CD8-positive, alpha-beta T cell (primary cell): ENCODE measurements at regions of chr12 and their contacts with region 1.

Region 1: GRCh38 chr12:93378373-93379325 is 924 bp downstream of the NUDT4 start:
- DNase-seq: peak; percentile 18 to 85 (median 57)
- ATAC-seq: peak; percentile 54
- H3K4me3 ChIP-seq: peak overlapping the region; percentile 72 to 87
- H3K4me3 Mint-ChIP-seq: peak overlapping the region; percentile 99
- H3K27ac ChIP-seq: peak overlapping the region; percentile 77 to 81
- H3K27ac Mint-ChIP-seq: peak overlapping the region; percentile 99
- H3K4me1 ChIP-seq: peaks cover 23% of the 10 kb centered on the region
- H3K4me1 Mint-ChIP-seq: peaks cover 44% of the 10 kb centered on the region
- H3K27me3 ChIP-seq: no peaks in the 10 kb centered on the region
- H3K27me3 Mint-ChIP-seq: no peaks in the 10 kb centered on the region
- CTCF ChIP-seq: no peak

Region 2: DNA sequence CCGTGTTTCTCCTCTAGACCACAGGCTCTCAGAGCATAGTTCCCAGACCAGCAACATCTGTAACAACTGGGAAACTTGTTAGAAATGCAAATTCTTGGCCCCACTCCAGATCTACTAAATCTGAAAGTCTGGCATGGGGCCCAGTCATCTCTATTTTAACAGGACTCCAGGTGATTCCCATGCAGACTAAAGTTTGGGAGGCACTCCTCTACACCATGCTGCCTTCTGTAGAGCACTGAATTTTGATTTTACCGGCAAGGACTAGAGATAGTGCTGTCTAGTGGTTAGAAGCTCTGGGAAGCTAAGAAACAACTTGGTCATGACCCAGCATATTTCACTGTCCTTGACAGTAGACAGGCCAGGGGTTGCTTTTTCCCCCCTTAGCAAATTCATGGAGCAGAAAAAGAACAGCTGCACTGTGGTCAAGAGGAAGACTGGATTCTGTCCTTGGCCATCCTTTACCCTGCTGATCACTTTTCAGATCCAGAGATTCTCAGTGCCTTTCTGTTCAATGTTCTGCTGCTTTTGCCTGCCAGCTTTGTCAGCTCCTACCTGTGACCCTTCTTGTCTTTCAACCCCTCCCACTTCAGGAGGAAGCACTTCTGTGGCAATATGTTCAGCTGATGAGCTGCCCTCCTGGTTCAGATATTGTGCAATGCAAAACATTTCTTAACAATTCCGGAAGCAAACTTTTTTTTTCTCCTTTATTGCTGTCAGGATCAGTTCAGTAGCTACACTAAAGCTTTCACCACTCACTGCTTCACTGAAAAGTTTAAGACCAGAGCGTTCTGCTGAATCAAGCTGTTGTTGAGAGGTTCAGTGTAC is 134.7 kb before region 1 on chr12:
- CTCF ChIA-PET with region 1: interaction called, 3 read pairs
- POLR2A ChIA-PET with region 1: interaction called, 5 read pairs
- intact Hi-C with region 1: loop called (anchors 5 kb)
- DNase-seq: peak in 2 of 9 experiments; percentile 21 to 49
- ATAC-seq: no peak
- H3K4me3 ChIP-seq: no peak overlapping the region
- H3K4me3 Mint-ChIP-seq: peak overlapping the region; percentile 51
- H3K27ac ChIP-seq: peak overlapping the region in 1 of 2 experiments; percentile 5
- H3K27ac Mint-ChIP-seq: peak overlapping the region; percentile 89
- H3K4me1 ChIP-seq: peaks cover 31% of the 10 kb centered on the region
- H3K4me1 Mint-ChIP-seq: peaks cover 47% of the 10 kb centered on the region
- H3K27me3 ChIP-seq: no peaks in the 10 kb centered on the region
- H3K27me3 Mint-ChIP-seq: no peaks in the 10 kb centered on the region
- CTCF ChIP-seq: no peak

Region 3: DNA sequence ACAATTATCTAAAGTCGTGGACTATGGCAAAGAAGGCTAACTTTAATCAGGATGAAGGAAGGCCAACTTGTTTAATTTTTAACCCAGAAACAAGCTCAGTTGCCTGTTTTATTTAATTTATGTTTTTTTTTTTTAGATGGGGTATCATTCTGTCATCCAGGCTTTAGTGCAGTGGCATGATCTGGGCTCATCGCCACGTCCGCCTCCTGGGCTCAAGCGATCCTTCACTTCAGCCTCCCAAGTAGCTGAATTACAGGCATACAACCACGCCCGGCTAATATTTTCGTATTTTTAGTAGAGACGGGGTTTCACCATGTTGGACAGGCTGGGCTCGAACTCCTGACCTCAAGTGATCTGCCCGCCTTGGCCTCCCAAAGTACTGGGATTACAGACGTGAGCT is 18.8 kb after region 1 on chr12:
- CTCF ChIA-PET with region 1: interaction called, 38 read pairs
- POLR2A ChIA-PET with region 1: no interaction called
- intact Hi-C with region 1: loop called in 1 of 2 experiments (anchors 2 kb)
- DNase-seq: no peak
- ATAC-seq: no peak
- H3K4me3 ChIP-seq: no peak overlapping the region
- H3K4me3 Mint-ChIP-seq: no peak overlapping the region
- H3K27ac ChIP-seq: no peak overlapping the region
- H3K27ac Mint-ChIP-seq: no peak overlapping the region
- H3K4me1 ChIP-seq: no peaks in the 10 kb centered on the region
- H3K4me1 Mint-ChIP-seq: peaks cover 4% of the 10 kb centered on the region
- H3K27me3 ChIP-seq: no peaks in the 10 kb centered on the region
- H3K27me3 Mint-ChIP-seq: no peaks in the 10 kb centered on the region
- CTCF ChIP-seq: no peak

Region 4: DNA sequence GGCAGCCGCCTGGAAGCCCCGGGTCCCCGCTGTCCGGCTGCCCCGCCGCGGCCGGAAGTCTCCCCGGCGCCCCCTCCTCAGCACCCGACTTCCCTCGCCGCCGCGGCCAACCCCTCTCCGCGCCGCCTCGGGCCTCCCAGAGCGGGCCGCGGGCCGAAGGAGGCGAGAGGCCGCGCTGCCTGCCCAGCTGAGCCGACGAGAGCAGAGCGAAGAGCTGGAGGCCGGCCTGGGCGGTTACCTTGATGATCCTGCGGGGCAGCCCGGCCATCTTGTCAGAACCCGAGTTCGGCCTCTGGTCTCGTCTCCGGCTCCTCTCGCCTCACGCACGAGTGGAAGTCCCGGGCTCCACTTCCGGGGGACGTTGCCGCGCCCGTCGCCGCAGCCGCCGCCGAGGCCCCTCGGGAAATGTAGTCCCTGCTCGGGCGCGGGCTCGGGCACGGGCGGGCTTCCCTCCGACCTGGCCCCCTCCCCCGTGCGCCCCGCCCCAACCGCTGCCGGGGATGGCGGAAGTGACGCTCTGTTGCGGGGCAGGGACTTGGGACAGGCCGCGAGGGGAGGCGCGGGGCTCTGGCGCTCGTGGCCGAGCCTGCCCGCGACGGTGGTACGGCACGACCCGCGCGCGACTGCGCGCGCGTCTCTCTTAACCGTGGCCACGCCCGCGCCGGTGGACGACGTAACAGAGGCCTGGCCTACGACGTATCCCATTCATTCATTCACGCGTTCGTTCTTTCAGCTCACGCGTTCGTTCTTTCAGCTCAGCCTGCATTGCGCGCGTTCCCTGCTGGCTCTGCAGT is 63.2 kb after region 1 on chr12 and contains the start of gene UBE2N:
- CTCF ChIA-PET with region 1: no interaction called
- POLR2A ChIA-PET with region 1: interaction called, 3 read pairs
- intact Hi-C with region 1: loop called (anchors 1 to 2 kb)
- DNase-seq: peak; percentile 92 to 97 (median 96)
- ATAC-seq: peak; percentile 83
- H3K4me3 ChIP-seq: peak within 1 kb of the TSS; percentile 78
- H3K4me3 Mint-ChIP-seq: peak within 1 kb of the TSS; percentile 97
- H3K27ac ChIP-seq: peak within 1 kb of the TSS; percentile 87 to 90
- H3K27ac Mint-ChIP-seq: peak within 1 kb of the TSS; percentile 96
- H3K4me1 ChIP-seq: peaks cover 47% of the 10 kb centered on the region
- H3K4me1 Mint-ChIP-seq: peaks cover 48% of the 10 kb centered on the region
- H3K27me3 ChIP-seq: no peaks in the 10 kb centered on the region
- H3K27me3 Mint-ChIP-seq: no peaks in the 10 kb centered on the region
- CTCF ChIP-seq: no peak
- total RNA-seq, gene UBE2N: 89.5 to 93.6 TPM

Region 5: DNA sequence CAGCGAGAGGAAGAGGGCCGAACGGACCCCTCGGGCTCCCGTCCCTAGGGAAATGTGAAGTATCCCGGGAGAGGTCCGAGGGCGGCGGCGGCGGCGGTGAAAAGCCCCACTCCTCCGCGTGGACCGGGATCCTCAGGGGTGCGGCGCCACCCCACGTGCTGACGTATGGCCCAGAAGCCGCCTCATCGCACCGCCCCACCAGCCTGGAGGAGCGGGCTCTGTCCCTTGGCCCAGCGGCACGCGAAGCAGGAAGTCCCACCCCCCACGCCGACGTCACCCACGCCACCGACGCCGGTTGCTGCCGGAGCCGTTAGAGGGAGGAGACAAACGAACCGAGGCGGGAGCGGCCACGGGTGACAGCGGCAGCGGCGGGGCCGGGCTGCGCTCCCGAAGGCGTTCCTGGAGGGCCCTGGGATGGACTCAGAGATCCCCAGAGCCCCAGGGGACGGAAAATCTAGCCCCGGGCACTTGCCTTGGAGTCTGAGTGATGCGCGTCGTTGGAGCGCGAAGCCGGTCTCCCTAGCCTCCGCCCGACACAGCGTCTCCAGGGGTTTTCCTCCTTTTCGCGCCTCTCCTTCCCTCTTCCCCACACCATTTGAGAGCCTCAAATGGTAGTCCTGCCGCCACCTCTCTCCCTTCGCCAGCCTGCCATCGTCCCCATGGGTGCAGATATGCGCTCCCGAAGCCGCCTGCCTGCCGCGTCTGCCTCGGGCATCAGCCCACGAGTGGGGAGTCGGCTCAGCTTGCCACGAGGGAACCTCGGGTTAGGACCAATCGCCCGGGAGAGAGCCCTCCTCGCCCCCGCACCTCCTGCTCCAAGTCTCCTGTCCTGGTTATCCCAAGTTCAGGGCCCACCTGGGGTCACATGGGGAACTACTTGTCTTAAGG is 1081.3 kb after region 1 on chr12 and contains the start of gene CEP83:
- CTCF ChIA-PET with region 1: no interaction called
- POLR2A ChIA-PET with region 1: no interaction called
- intact Hi-C with region 1: loop called (anchors 2 to 5 kb)
- DNase-seq: peak; percentile 90 to 98 (median 97)
- ATAC-seq: peak; percentile 96
- H3K4me3 ChIP-seq: peak within 1 kb of the TSS; percentile 94 to 96
- H3K4me3 Mint-ChIP-seq: peak within 1 kb of the TSS; percentile 96
- H3K27ac ChIP-seq: peak within 1 kb of the TSS; percentile 91 to 93
- H3K27ac Mint-ChIP-seq: peak within 1 kb of the TSS; percentile 94
- H3K4me1 ChIP-seq: peaks cover 6% of the 10 kb centered on the region
- H3K4me1 Mint-ChIP-seq: peaks cover 33% of the 10 kb centered on the region
- H3K27me3 ChIP-seq: peaks cover 0 to 2% of the 10 kb centered on the region in 2 experiments
- H3K27me3 Mint-ChIP-seq: peaks cover 5% of the 10 kb centered on the region
- CTCF ChIP-seq: no peak
- total RNA-seq, gene CEP83: 9.7 to 11.2 TPM

Region 6: DNA sequence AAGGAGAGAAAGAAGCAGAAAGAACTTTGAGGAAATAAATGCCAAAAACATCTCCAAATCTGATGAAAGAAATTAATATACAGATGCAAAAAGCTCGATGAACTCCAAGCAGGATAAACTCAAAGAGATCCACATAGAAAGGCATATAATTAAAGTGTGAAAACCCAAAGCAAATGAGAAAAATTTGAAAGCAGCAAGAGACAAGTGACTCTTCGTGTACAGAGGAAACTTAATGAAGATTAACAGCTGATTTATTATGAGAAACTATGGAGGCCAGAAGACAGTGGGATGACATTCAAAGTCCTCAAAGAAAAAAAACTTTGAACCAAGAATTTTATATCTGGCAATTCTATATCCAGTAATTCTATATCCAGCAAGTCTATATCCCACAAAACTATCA is 1434.7 kb after region 1 on chr12:
- CTCF ChIA-PET with region 1: no interaction called
- POLR2A ChIA-PET with region 1: no interaction called
- intact Hi-C with region 1: no loop called
- DNase-seq: no peak
- ATAC-seq: no peak
- H3K4me3 ChIP-seq: no peak overlapping the region
- H3K4me3 Mint-ChIP-seq: no peak overlapping the region
- H3K27ac ChIP-seq: no peak overlapping the region
- H3K27ac Mint-ChIP-seq: no peak overlapping the region
- H3K4me1 ChIP-seq: no peaks in the 10 kb centered on the region
- H3K4me1 Mint-ChIP-seq: no peaks in the 10 kb centered on the region
- H3K27me3 ChIP-seq: no peaks in the 10 kb centered on the region
- H3K27me3 Mint-ChIP-seq: peaks cover 3% of the 10 kb centered on the region
- CTCF ChIP-seq: no peak